ENCODE measurements at regions of chr11 and their contacts with region 1.

Region 1: GRCh38 chr11:33161120-33162005 is at the start of gene CSTF3:
- DNase-seq: peak; percentile 99
- H3K4me3 Mint-ChIP-seq: peak within 1 kb of the TSS; percentile 88
- H3K27ac Mint-ChIP-seq: peak within 1 kb of the TSS; percentile 97
- H3K4me1 Mint-ChIP-seq: peaks cover 22% of the 10 kb centered on the region
- H3K27me3 Mint-ChIP-seq: no peaks in the 10 kb centered on the region
- CTCF ChIP-seq: peak; percentile 9
- total RNA-seq, gene CSTF3: 37.5 and 48.4 TPM in 2 replicates

Region 2: DNA sequence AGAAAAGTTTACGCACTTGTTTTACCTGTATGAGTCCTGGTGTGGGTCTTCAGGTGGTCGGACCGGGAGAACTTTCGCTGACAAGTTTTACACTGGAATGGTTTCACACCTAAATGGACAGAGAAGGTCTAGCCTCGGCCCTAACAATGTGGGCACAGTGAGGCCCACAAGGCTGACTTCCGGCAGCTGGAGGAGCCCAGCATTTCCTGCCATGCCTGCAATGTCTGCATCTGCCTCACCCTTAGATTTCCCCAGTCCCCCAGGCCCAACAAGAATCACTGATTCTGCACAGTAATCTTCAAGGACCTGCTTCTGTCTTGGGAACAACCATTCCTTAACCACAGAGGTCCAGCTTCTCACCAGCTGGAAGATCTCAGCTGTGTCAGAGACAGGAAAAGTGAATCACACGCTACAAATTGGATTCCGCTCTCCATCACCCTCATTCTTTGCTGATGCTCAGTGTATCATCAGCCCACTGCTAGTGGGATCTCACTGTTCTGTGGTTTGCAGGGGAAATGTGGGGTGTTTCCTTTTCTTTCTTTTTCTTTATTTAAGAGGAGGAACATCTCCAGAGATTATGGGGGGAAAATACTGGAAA is 769.3 kb before region 1 on chr11:
- CTCF ChIA-PET with region 1: no interaction called
- POLR2A ChIA-PET with region 1: no interaction called
- intact Hi-C with region 1: no loop called
- DNase-seq: no peak
- H3K4me3 Mint-ChIP-seq: no peak overlapping the region
- H3K27ac Mint-ChIP-seq: no peak overlapping the region
- H3K4me1 Mint-ChIP-seq: no peaks in the 10 kb centered on the region
- H3K27me3 Mint-ChIP-seq: no peaks in the 10 kb centered on the region
- CTCF ChIP-seq: no peak

Region 3: GRCh38 chr11:33178443-33179180 is 17.2 kb after region 1 on chr11:
- CTCF ChIA-PET with region 1: interaction called, 18 read pairs
- POLR2A ChIA-PET with region 1: interaction called, 8 read pairs
- intact Hi-C with region 1: no loop called
- DNase-seq: no peak
- H3K4me3 Mint-ChIP-seq: no peak overlapping the region
- H3K27ac Mint-ChIP-seq: no peak overlapping the region
- H3K4me1 Mint-ChIP-seq: no peaks in the 10 kb centered on the region
- H3K27me3 Mint-ChIP-seq: no peaks in the 10 kb centered on the region
- CTCF ChIP-seq: no peak

Region 4: DNA sequence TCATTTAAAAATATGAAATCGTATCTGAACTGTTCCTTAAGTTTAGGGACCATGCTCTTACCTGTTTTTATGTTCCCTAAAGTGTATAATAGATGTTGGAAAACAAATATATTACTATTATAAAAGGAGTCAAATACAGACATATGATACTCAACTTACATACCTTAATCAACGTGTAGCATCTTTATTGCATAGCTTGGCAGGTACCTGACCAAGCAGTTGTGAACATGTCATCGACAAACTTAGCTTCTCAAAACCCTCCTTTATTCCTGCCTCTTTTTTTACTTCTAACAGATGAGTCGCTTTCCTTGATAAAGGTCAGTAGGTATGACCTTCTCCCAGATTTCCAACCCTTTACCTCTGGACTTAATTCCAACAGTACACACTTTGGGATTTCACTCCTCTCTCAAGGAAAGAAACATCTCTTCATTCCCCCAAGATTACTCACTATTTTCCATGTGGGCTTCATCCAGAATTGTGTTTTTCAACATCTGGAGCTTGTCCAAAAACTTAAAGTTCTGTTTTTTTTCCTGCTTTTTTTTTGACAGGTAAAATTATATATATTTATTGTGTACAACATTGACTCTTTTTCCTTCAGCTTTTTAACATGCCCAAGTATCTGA is 107.7 kb after region 1 on chr11:
- CTCF ChIA-PET with region 1: interaction called, 6 read pairs
- POLR2A ChIA-PET with region 1: interaction called, 10 read pairs
- intact Hi-C with region 1: no loop called
- DNase-seq: no peak
- H3K4me3 Mint-ChIP-seq: no peak overlapping the region
- H3K27ac Mint-ChIP-seq: peak overlapping the region; percentile 8
- H3K4me1 Mint-ChIP-seq: peaks cover 17% of the 10 kb centered on the region
- H3K27me3 Mint-ChIP-seq: no peaks in the 10 kb centered on the region
- CTCF ChIP-seq: no peak

Region 5: DNA sequence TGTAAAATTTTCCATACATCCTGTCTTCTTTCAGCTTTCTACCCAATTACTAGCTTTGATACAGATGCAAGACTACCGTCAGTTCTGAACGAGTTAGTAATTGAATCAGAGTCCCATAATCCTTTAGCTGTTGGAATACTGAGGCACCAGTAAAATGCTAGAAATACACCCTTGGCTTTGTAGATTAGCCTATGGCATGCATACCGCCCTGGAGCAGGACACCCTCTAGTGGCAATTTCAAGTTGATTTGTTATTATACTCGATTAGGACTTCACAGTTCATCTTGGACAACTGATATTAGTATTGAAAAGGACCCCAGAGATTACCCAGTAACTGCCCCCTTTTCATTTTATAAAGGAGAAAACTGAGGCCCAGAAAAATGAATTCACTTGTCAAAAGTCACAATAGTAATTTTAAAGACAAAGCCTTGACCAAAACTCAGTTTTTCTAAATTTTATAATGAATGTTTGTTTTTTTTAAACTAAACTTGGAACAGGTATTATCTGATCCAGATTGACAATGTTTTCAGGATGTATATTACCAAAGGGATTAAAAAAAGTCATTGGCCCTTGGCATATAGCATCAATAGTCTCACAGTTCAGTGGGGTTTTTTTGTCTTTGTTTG is 168.5 kb after region 1 on chr11:
- CTCF ChIA-PET with region 1: interaction called, 146 read pairs
- POLR2A ChIA-PET with region 1: interaction called, 6 read pairs
- intact Hi-C with region 1: loop called (anchors 1 kb)
- DNase-seq: peak; percentile 68
- H3K4me3 Mint-ChIP-seq: no peak overlapping the region
- H3K27ac Mint-ChIP-seq: peak overlapping the region; percentile 49
- H3K4me1 Mint-ChIP-seq: peaks cover 20% of the 10 kb centered on the region
- H3K27me3 Mint-ChIP-seq: no peaks in the 10 kb centered on the region
- CTCF ChIP-seq: peak; percentile 59

Region 6: DNA sequence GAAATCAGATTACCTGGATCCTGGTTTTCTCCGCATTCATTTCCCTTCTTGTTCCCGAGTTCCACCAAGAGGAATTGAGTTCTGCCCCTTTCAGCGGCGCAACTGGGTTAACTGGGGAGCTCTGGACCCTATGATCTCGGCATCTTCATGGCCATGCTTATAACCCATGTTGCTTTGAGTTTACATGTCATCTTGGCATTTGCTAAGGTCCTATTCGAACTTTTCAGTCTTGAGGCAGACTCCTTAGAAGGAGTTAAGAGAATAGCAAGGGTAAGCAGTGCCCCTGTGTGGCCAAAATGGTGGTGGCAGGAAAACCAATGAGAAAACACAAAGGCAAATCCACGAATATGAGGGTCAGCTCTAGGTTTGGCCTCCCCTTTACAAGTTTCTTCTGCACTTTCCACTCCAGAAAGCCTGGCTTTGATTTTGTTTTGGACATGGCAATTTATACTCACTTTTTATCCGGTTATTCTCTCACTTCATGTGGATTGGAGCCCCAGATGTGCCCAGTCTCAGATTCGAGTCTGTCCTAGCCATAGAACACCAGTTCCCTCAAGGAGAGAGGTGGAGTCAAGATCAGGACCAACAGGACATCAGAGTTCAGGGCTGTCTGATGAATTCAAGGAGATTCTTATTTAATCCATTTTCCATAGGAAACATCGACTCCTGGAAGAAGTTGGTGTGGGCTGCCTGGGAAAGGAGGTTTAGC is 668.2 kb after region 1 on chr11:
- CTCF ChIA-PET with region 1: interaction called, 3 read pairs
- POLR2A ChIA-PET with region 1: no interaction called
- intact Hi-C with region 1: loop called (anchors 2 kb)
- DNase-seq: peak; percentile 77
- H3K4me3 Mint-ChIP-seq: peak overlapping the region; percentile 62
- H3K27ac Mint-ChIP-seq: peak overlapping the region; percentile 42
- H3K4me1 Mint-ChIP-seq: peaks cover 6% of the 10 kb centered on the region
- H3K27me3 Mint-ChIP-seq: peaks cover 15% of the 10 kb centered on the region
- CTCF ChIP-seq: peak; percentile 82

Measured in MCF 10A (cell line).